ENCODE measurements at regions of chr19 and their contacts with region 1.

Region 1: DNA sequence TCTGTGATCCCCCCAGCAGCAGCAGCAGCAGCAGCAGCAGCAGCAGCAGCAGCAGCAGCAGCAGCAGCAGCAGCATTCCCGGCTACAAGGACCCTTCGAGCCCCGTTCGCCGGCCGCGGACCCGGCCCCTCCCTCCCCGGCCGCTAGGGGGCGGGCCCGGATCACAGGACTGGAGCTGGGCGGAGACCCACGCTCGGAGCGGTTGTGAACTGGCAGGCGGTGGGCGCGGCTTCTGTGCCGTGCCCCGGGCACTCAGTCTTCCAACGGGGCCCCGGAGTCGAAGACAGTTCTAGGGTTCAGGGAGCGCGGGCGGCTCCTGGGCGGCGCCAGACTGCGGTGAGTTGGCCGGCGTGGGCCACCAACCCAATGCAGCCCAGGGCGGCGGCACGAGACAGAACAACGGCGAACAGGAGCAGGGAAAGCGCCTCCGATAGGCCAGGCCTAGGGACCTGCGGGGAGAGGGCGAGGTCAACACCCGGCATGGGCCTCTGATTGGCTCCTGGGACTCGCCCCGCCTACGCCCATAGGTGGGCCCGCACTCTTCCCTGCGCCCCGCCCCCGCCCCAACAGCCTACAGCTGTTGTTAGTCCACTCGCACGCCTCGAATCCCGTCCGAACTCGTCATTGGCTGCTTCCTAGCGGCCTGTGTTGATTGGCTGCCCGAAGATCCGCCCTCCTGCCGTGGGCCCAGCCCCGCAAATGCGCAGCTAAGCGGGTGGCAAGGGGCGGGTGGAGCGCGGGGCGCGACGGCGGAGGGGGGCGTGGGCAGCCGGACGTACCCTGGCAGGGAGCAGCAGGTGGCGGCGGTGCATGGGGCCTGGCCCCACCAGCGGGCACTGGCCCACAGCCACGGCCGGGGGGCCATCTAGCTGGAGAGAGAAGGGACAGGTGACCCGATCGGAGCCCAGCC is 1.4 kb upstream of the SIX5 start:
- DNase-seq: peak; percentile 97
- H3K4me3 ChIP-seq: peak overlapping the region; percentile 67
- H3K27ac ChIP-seq: peak overlapping the region; percentile 93
- H3K27me3 ChIP-seq: no peaks in the 10 kb centered on the region
- CTCF ChIP-seq: peak; percentile 79

Region 2: DNA sequence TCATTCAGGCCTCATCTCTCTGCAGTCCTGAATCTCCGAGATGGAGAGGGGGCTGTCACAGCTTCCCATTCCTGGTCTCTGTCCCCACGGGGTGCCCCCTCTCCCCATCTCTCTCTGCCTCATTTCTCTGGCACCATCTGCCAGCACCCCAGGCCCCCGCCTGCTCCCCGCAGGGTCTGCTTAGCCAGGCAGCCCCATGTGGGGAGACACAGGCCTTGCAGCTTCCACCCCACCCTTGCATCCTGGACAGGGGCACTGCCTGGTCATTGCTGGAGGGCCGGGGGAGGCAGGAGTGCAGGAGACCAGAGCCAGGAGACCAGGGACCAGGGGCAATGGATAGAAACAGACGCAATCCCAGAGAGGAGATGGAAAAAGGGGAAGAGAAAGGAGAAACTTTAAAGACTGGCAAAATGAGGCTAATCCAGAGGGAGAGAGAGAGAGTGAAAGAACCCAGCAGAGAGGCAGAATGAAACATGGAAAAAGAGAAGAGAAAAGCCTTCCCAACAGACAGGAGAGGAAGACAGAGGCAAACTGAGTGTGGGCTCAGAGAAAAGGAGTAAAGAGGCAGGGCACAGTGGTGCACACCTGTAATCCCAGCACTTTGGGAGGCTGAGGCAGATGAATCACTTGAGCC is 111.2 kb before region 1 on chr19:
- CTCF ChIA-PET with region 1: no interaction called
- POLR2A ChIA-PET with region 1: no interaction called
- DNase-seq: no peak
- H3K4me3 ChIP-seq: no peak overlapping the region
- H3K27ac ChIP-seq: no peak overlapping the region
- H3K27me3 ChIP-seq: peaks cover 4% of the 10 kb centered on the region
- CTCF ChIP-seq: no peak

Region 3: GRCh38 chr19:45717166-45717982 is 53.1 kb before region 1 on chr19:
- CTCF ChIA-PET with region 1: interaction called, 6 read pairs
- POLR2A ChIA-PET with region 1: interaction called, 46 read pairs
- DNase-seq: peak; percentile 97
- H3K4me3 ChIP-seq: peak overlapping the region; percentile 69
- H3K27ac ChIP-seq: peak overlapping the region; percentile 97
- H3K27me3 ChIP-seq: no peaks in the 10 kb centered on the region
- CTCF ChIP-seq: 0 out of 2 replicates have a peak, but pooled peaks have one; percentile 16

Region 4: GRCh38 chr19:45753546-45753945 is 16.9 kb before region 1 on chr19:
- CTCF ChIA-PET with region 1: interaction called, 3 read pairs
- POLR2A ChIA-PET with region 1: interaction called, 12 read pairs
- DNase-seq: no peak
- H3K4me3 ChIP-seq: no peak overlapping the region
- H3K27ac ChIP-seq: no peak overlapping the region
- H3K27me3 ChIP-seq: no peaks in the 10 kb centered on the region
- CTCF ChIP-seq: peak; percentile 15; the same call in 1 of the 2 replicates

Region 5: DNA sequence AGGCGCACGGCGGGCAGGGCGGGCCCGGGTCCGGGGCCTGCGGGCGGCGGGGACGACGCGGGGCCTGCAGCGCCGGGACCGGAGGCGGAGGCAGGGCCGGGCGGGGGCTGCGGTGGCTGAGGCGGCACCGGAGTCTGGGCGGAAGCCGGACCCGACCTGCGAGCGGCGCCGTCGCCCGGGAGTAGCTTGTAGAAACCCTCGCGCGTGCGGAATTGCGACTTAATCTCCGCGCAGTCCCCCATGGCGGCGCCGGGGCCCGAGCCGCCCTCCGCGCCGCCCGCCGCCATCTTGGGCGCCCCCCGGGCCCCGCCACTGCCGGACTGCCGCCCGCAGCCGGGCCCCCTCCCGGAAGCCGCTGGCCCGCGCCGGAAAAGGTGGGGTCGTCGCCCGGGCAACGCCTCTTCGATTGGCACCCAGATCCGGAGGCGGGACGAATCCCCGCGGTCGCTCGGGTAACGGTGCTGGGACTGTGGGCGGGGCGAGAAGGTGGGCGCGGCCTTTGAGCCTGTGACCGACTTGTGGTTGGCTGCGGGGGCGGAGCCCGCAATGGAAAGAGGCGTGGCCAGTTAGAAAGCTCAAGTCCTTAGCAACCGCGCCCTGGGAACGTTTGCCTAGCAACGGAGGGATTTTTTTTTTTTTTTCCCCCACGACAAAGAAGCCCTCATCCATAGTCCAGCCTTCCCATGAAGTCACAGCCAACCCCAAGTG is 22.2 kb after region 1 on chr19 and contains the start of gene DMWD:
- CTCF ChIA-PET with region 1: interaction called, 6 read pairs
- POLR2A ChIA-PET with region 1: interaction called, 24 read pairs
- DNase-seq: peak; percentile 98
- H3K4me3 ChIP-seq: peak within 1 kb of the TSS; percentile 90
- H3K27ac ChIP-seq: no peak within 1 kb of the TSS
- H3K27me3 ChIP-seq: no peaks in the 10 kb centered on the region
- CTCF ChIP-seq: no peak
- polyA plus RNA-seq, gene DMWD: 13.9 and 17.1 TPM in 2 replicates

Region 6: GRCh38 chr19:45817010-45817724 is 46.7 kb after region 1 on chr19:
- CTCF ChIA-PET with region 1: interaction called, 14 read pairs
- POLR2A ChIA-PET with region 1: interaction called, 6 read pairs
- DNase-seq: peak; percentile 85
- H3K4me3 ChIP-seq: no peak overlapping the region
- H3K27ac ChIP-seq: no peak overlapping the region
- H3K27me3 ChIP-seq: no peaks in the 10 kb centered on the region
- CTCF ChIP-seq: peak; percentile 94